Naive thymus-derived CD4-positive, alpha-beta T cell (primary cell): ENCODE measurements at regions of chr6 and their contacts with region 1.

Region 1: GRCh38 chr6:25717866-25718740 is 36.4 kb upstream of the SLC17A4 start:
- DNase-seq: peak in 4 of 9 donors; percentile 4 to 14 (median 10)
- ATAC-seq: no peak
- H3K4me3 ChIP-seq: no peak overlapping the region
- H3K4me3 Mint-ChIP-seq: no peak overlapping the region
- H3K27ac ChIP-seq: no peak overlapping the region
- H3K27ac Mint-ChIP-seq: no peak overlapping the region
- H3K4me1 ChIP-seq: no peaks in the 10 kb centered on the region
- H3K4me1 Mint-ChIP-seq: no peaks in the 10 kb centered on the region
- H3K27me3 ChIP-seq: no peaks in the 10 kb centered on the region
- H3K27me3 Mint-ChIP-seq: peaks cover 0 to 32% (median 12%) of the 10 kb centered on the region in 5 donors

Region 2: DNA sequence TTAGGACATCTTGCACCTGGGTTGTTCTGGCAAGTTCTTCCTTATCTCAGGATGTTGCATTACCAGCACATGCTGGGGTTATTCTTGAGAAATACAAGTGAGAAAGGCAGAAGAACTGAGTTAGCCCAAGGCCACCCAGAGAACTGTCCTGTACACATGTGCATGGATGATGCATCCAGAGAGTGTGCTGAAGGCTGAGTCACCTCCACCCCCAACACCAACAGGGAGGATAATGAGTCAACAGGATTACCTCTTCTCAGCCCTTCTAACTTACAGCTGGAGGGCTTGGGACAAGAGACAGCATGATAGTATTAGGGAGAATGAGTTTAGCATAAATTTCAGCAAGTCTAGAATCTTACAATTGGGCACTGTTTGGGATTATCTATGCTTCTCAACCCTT is 57.6 kb before region 1 on chr6:
- CTCF ChIA-PET with region 1: no interaction called
- POLR2A ChIA-PET with region 1: no interaction called
- intact Hi-C with region 1: no loop called
- DNase-seq: no peak
- ATAC-seq: no peak
- H3K4me3 ChIP-seq: no peak overlapping the region
- H3K4me3 Mint-ChIP-seq: no peak overlapping the region
- H3K27ac ChIP-seq: no peak overlapping the region
- H3K27ac Mint-ChIP-seq: no peak overlapping the region
- H3K4me1 ChIP-seq: no peaks in the 10 kb centered on the region
- H3K4me1 Mint-ChIP-seq: no peaks in the 10 kb centered on the region
- H3K27me3 ChIP-seq: no peaks in the 10 kb centered on the region
- H3K27me3 Mint-ChIP-seq: peaks cover 32 to 52% (median 43%) of the 10 kb centered on the region in 5 donors

Region 3: DNA sequence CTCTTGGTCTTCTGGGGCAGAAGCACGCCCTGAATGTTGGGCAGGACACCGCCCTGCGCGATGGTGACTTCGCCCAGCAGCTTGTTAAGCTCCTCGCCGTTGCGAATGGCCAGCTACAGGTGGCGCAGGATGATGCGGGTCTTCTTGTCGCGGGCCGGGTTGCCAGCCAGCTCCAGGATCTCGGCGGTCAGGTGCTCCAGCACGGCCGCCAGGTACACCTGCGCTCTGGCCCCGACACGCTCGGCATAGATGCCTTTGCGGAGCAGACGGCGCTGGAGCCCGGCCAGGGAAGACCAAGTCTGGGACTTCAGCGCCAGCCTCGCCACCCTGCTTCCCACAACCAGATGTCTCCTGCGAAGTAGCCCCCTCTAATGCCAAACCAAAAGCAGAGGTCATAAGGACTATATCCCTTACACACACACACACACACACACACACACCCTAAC is 164.0 kb after region 1 on chr6:
- CTCF ChIA-PET with region 1: no interaction called
- POLR2A ChIA-PET with region 1: no interaction called
- intact Hi-C with region 1: loop called in 1 of 2 experiments (anchors 2 kb)
- DNase-seq: peak in 7 of 9 donors; percentile 10 to 61 (median 35)
- ATAC-seq: peak; percentile 81
- H3K4me3 ChIP-seq: peak overlapping the region; percentile 53
- H3K4me3 Mint-ChIP-seq: peak overlapping the region in 8 of 10 donors; percentile 71 to 88 (median 84)
- H3K27ac ChIP-seq: no peak overlapping the region
- H3K27ac Mint-ChIP-seq: peak overlapping the region in 4 of 9 donors; percentile 16 to 60 (median 33)
- H3K4me1 ChIP-seq: no peaks in the 10 kb centered on the region
- H3K4me1 Mint-ChIP-seq: peaks cover 0 to 14% (median 0%) of the 10 kb centered on the region in 7 donors
- H3K27me3 ChIP-seq: no peaks in the 10 kb centered on the region
- H3K27me3 Mint-ChIP-seq: peaks cover 0 to 7% (median 0%) of the 10 kb centered on the region in 5 donors

Region 4: DNA sequence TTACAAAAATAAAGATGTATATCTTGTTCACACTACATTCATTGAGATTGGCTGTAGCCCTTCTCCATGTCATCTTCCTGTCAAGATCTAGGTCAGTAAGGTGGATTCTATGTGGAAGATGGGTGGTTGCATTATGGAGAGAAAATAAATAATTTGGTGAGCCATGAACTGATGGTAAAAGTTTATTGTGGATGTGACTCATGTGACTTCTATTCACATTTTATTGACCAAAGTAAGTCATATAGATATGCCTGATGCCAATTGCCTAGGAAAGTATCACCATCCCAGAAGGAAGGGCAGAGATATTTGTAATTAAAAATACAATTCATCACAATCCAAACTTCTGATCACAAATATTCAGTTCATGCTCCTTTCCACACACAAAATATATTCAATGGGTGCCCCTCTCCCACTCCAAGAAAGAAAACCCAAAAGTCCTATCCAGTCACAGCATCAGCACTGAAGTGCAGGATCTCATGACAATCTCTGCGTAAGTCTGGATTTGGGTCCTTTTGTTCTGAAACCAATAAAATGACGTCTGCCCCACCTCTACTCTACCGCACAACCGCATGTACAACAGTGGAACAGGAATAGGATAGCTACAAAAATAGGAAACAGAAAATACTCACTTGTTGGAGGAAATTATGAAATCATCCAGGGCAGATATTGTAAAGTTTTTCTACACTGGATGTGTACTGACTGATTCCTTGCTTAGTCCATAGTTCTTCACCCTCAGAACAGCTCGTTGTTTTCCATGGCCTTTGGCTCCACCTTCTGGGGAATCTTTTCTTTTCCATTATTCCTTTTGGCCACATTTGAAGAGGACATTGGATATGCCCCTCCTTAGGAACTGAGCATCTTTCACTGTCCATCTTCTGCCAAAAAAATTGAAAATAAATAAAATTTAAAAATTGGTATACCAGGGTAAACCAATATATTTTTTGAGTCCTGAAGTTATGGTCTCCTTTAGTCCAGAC is 172.1 kb after region 1 on chr6:
- CTCF ChIA-PET with region 1: no interaction called
- POLR2A ChIA-PET with region 1: no interaction called
- intact Hi-C with region 1: loop called (anchors 1 kb)
- DNase-seq: peak in 3 of 9 donors; percentile 7 to 14 (median 11)
- ATAC-seq: peak; percentile 44
- H3K4me3 ChIP-seq: no peak overlapping the region
- H3K4me3 Mint-ChIP-seq: no peak overlapping the region
- H3K27ac ChIP-seq: no peak overlapping the region
- H3K27ac Mint-ChIP-seq: peak overlapping the region in 1 of 9 donors; percentile 58
- H3K4me1 ChIP-seq: no peaks in the 10 kb centered on the region
- H3K4me1 Mint-ChIP-seq: peaks cover 0 to 1% (median 0%) of the 10 kb centered on the region in 7 donors
- H3K27me3 ChIP-seq: no peaks in the 10 kb centered on the region
- H3K27me3 Mint-ChIP-seq: peaks cover 0 to 14% (median 3%) of the 10 kb centered on the region in 5 donors

Region 5: DNA sequence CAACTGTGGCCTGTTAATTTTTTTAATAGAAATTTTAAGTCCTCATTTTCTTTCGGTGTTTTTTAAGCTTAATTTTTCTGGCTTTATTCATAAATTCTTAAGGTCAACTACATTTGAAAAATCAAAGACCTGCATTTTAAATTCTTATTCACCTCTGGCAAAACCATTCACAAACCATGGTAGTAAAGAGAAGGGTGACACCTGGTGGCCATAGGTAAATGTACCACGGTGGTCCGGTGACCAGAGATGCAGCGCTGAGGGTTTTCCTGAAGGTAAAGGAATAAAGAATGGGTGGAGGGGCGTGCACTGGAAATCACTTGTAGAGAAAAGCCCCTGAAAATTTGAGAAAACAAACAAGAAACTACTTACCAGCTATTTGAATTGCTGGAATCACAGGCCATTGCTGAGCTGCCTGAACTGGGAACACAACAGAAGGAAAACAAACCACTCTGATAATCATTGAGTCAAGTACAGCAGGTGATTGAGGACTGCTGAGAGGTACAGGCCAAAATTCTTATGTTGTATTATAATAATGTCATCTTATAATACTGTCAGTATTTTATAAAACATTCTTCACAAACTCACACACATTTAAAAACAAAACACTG is 379.3 kb after region 1 on chr6:
- CTCF ChIA-PET with region 1: no interaction called
- POLR2A ChIA-PET with region 1: no interaction called
- intact Hi-C with region 1: loop called in 1 of 2 experiments (anchors 2 kb)
- DNase-seq: peak; percentile 23 to 75 (median 61)
- ATAC-seq: peak; percentile 92
- H3K4me3 ChIP-seq: no peak overlapping the region
- H3K4me3 Mint-ChIP-seq: no peak overlapping the region
- H3K27ac ChIP-seq: no peak overlapping the region
- H3K27ac Mint-ChIP-seq: no peak overlapping the region
- H3K4me1 ChIP-seq: no peaks in the 10 kb centered on the region
- H3K4me1 Mint-ChIP-seq: peaks cover 4 to 13% (median 8%) of the 10 kb centered on the region in 7 donors
- H3K27me3 ChIP-seq: no peaks in the 10 kb centered on the region
- H3K27me3 Mint-ChIP-seq: peaks cover 0 to 9% (median 0%) of the 10 kb centered on the region in 5 donors

Region 6: GRCh38 chr6:26205166-26205624 is 487.1 kb after region 1 on chr6:
- CTCF ChIA-PET with region 1: no interaction called
- POLR2A ChIA-PET with region 1: no interaction called
- intact Hi-C with region 1: no loop called
- DNase-seq: peak; percentile 50 to 92 (median 89)
- ATAC-seq: peak; percentile 79
- H3K4me3 ChIP-seq: peak overlapping the region; percentile 77
- H3K4me3 Mint-ChIP-seq: no peak overlapping the region
- H3K27ac ChIP-seq: peak overlapping the region; percentile 90
- H3K27ac Mint-ChIP-seq: no peak overlapping the region
- H3K4me1 ChIP-seq: peaks cover 16 to 18% of the 10 kb centered on the region in 2 donors
- H3K4me1 Mint-ChIP-seq: peaks cover 5 to 29% (median 21%) of the 10 kb centered on the region in 7 donors
- H3K27me3 ChIP-seq: no peaks in the 10 kb centered on the region
- H3K27me3 Mint-ChIP-seq: peaks cover 0 to 5% (median 0%) of the 10 kb centered on the region in 5 donors